ENCODE measurements at regions of chr19 and their contacts with region 1.

Region 1: DNA sequence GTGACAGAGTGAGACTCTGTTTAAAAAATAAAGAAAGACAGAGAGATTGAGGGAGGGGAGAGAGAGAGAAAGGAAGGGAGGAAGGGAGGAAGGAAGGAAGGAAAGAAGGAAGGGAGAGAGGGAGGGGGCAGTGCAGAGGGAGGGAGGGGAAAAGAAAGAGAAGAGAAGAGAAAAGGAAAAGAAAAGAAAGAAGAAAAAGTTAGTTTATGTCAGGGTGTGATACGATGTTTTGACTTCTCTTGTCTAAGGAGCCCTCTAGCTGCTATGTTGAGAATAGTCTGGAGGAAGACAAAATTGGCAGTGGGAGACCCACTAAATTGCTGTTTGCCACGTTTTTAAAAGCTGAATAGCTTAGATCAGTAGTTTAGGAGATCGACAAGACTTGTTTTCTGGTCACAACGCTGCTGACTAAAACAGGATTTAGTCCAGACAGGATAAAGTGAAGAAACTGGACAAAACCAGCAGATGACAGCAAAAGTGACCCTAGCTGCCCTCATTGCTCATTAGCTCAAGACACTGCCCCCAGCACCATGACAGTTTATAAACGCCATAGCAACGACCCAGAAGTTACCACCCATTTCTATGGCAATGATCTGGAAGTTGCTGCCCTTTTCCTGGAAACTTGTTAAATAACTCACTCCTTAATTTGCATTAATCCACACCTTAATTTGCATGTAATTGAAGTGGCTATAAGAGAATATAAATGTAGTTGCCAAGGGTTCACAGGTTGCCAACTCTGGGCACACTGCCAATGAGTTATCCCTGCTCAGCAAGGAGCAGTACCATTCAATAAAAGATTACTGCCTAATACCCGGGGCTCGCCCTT is 11.1 kb downstream of the TEX101 start:
- DNase-seq: peak; percentile 56
- H3K4me3 Mint-ChIP-seq: no peak overlapping the region
- H3K27ac Mint-ChIP-seq: peak overlapping the region; percentile 50
- H3K4me1 Mint-ChIP-seq: peaks cover 17% of the 10 kb centered on the region
- H3K27me3 Mint-ChIP-seq: no peaks in the 10 kb centered on the region
- CTCF ChIP-seq: peak; percentile 40

Region 2: GRCh38 chr19:43101950-43102349 is 323.8 kb before region 1 on chr19:
- CTCF ChIA-PET with region 1: interaction called, 7 read pairs
- POLR2A ChIA-PET with region 1: no interaction called
- intact Hi-C with region 1: loop called (anchors 10 kb)
- DNase-seq: no peak
- H3K4me3 Mint-ChIP-seq: no peak overlapping the region
- H3K27ac Mint-ChIP-seq: no peak overlapping the region
- H3K4me1 Mint-ChIP-seq: peaks cover 6% of the 10 kb centered on the region
- H3K27me3 Mint-ChIP-seq: no peaks in the 10 kb centered on the region
- CTCF ChIP-seq: no peak

Region 3: DNA sequence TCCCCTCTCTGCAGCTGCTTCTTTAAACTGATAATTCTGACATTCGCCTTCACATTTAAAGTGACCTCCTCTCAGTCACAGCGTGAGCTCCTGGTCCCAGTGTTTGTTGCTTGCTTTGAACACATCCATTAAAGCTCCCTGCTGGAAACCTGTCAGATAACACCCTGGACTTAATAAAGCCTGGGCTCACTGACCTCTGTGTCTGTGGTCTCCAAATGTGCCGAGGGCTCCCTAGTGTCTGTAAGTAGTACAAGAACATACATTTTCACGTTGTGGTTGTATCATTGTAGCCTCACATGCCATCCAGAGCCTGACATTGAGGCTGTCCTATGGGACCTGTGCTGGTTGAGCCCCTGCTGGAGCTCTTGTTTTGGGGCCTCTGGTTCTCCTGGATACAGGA is 217.8 kb before region 1 on chr19:
- CTCF ChIA-PET with region 1: interaction called, 4 read pairs
- POLR2A ChIA-PET with region 1: no interaction called
- intact Hi-C with region 1: loop called (anchors 5 kb)
- DNase-seq: no peak
- H3K4me3 Mint-ChIP-seq: no peak overlapping the region
- H3K27ac Mint-ChIP-seq: no peak overlapping the region
- H3K4me1 Mint-ChIP-seq: peaks cover 3% of the 10 kb centered on the region
- H3K27me3 Mint-ChIP-seq: no peaks in the 10 kb centered on the region
- CTCF ChIP-seq: no peak

Region 4: GRCh38 chr19:43265664-43266025 is 160.1 kb before region 1 on chr19:
- CTCF ChIA-PET with region 1: interaction called, 3 read pairs
- POLR2A ChIA-PET with region 1: no interaction called
- intact Hi-C with region 1: loop called (anchors 5 kb)
- DNase-seq: no peak
- H3K4me3 Mint-ChIP-seq: peak overlapping the region; percentile 55
- H3K27ac Mint-ChIP-seq: peak overlapping the region; percentile 83
- H3K4me1 Mint-ChIP-seq: peaks cover 31% of the 10 kb centered on the region
- H3K27me3 Mint-ChIP-seq: no peaks in the 10 kb centered on the region
- CTCF ChIP-seq: no peak

Region 5: DNA sequence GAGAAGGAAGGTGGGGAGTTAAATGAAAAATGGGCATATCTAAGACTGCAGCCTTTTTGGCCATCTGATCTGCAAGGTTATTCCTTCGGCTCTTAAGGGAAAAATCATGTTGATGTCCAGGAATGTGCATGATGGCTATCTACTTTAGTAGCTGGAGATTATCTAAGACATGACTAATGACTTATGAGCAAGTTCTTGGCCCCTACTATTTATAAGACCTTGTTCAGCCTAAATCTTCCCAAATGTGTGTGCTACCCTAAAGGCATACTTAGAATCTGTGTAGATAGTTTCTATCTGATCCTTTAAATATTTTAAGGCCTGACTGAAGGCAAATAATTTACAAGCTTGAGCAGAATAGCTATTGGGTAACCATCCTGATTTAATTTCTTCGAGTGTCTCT is 114.1 kb before region 1 on chr19:
- CTCF ChIA-PET with region 1: interaction called, 15 read pairs
- POLR2A ChIA-PET with region 1: no interaction called
- intact Hi-C with region 1: no loop called
- DNase-seq: no peak
- H3K4me3 Mint-ChIP-seq: no peak overlapping the region
- H3K27ac Mint-ChIP-seq: no peak overlapping the region
- H3K4me1 Mint-ChIP-seq: peaks cover 4% of the 10 kb centered on the region
- H3K27me3 Mint-ChIP-seq: no peaks in the 10 kb centered on the region
- CTCF ChIP-seq: no peak

Region 6: DNA sequence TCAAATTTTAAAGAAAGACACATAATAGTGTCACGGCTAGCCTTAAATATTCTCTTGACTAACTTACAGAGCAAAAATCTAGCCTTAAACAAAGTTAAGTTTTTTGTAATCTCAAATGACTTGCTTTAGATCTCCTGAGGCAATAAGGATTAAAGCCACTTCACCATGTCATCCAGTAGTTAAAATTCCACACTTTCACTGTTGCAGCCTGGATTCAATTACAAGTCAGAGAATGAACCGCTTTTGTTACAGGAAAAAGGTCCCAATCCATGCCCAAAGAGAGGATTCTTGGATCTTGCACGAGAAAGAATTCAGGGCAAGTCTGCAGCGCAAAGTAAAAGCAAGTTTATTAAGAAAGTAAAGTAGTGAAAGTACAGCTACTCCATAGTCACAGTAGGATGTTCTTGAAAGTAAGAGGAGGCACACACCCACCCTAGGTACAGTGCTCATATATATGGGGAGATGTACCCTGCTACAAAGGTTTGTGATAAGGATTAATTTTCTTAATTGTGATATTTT is 106.9 kb before region 1 on chr19:
- CTCF ChIA-PET with region 1: interaction called, 11 read pairs
- POLR2A ChIA-PET with region 1: no interaction called
- intact Hi-C with region 1: no loop called
- DNase-seq: no peak
- H3K4me3 Mint-ChIP-seq: no peak overlapping the region
- H3K27ac Mint-ChIP-seq: no peak overlapping the region
- H3K4me1 Mint-ChIP-seq: peaks cover 10% of the 10 kb centered on the region
- H3K27me3 Mint-ChIP-seq: no peaks in the 10 kb centered on the region
- CTCF ChIP-seq: no peak

Region 7: DNA sequence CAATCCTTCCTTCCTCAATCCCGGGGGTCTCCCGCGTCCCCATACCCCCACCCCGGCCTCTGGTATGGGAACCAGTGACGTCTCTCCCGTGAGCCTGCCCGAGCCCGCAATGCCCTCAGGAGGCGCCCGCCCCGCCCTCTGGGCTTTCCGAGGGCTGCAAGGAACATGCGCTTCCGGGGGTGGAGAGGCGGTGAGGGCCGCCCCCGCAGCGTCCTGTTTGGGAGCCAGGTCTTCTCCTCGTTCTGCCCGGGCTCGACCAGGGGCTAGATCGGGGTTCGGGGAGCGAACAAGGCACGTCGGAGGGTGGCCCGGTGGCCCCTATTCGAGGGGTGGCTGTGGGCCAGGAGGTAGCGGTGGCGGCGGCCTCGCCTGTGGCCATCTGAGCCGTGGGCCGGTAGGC is 17.7 kb before region 1 on chr19:
- CTCF ChIA-PET with region 1: interaction called, 19 read pairs
- POLR2A ChIA-PET with region 1: interaction called, 3 read pairs
- intact Hi-C with region 1: no loop called
- DNase-seq: no peak
- H3K4me3 Mint-ChIP-seq: no peak overlapping the region
- H3K27ac Mint-ChIP-seq: no peak overlapping the region
- H3K4me1 Mint-ChIP-seq: no peaks in the 10 kb centered on the region
- H3K27me3 Mint-ChIP-seq: no peaks in the 10 kb centered on the region
- CTCF ChIP-seq: no peak

Measured in MCF 10A (cell line).